OCI-LY7 (cell line): ENCODE measurements at regions of chr11 and their contacts with region 1.

Region 1: DNA sequence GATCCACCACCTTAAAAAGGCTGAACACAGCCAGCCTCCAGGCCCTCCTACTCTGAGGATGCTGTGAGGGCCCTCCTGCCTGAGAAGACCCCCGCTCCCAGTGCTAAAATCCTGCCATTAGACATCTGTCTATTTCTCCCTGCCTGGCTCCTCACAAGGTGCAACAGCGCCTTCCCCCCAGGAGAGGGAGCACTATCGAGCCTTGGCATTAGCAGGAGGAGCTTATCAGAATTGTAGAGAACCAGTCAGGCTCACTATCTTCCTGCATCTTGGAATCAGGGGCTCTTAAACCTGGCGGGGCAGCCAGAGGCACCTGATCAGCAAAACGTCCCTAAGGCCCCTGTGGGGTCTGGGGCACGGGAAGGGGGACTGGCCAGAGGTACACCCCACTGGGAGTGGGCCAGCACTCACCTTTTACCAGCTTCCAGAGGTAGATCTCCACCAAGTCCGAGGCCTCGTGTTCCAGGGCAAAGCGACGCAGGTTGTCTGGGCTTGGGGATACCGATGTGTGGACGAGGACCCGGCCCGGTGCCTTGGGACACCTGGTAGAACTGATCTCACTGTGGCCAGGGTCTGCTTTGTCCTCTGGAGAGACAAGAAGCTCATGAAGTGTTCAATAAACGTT is 28.7 kb downstream of the CHRDL2 start:
- DNase-seq: peak; percentile 63
- H3K4me3 ChIP-seq: no peak overlapping the region
- H3K27ac ChIP-seq: no peak overlapping the region
- H3K4me1 ChIP-seq: no peaks in the 10 kb centered on the region
- CTCF ChIP-seq: peak; percentile 89

Region 2: GRCh38 chr11:74806267-74806666 is 103.8 kb after region 1 on chr11:
- CTCF ChIA-PET with region 1: no interaction called
- POLR2A ChIA-PET with region 1: no interaction called
- intact Hi-C with region 1: no loop called
- DNase-seq: no peak
- H3K4me3 ChIP-seq: no peak overlapping the region
- H3K27ac ChIP-seq: no peak overlapping the region
- H3K4me1 ChIP-seq: no peaks in the 10 kb centered on the region
- CTCF ChIP-seq: no peak

Region 3: DNA sequence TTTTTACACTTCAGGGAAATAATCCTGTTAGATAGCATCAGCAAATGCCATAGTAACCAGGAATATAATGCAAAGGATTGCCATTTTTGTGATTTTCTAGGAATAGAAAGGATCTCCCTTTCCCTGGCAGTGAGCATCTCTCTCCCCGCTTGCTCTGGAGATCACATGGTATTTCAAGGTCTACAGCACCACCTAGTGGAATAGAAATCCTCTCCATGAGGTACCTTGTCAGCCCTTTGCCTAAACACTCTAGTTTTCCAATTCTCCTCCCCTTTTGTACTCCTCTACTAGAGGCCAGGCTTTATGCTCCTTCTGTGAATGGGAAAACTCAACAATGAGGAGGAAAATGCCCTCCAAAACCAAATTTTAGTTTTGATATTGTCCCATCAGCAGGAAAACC is 168.0 kb after region 1 on chr11:
- CTCF ChIA-PET with region 1: interaction called, 3 read pairs
- POLR2A ChIA-PET with region 1: no interaction called
- intact Hi-C with region 1: loop called (anchors 1 kb)
- DNase-seq: peak; percentile 63
- H3K4me3 ChIP-seq: no peak overlapping the region
- H3K27ac ChIP-seq: no peak overlapping the region
- H3K4me1 ChIP-seq: no peaks in the 10 kb centered on the region
- CTCF ChIP-seq: peak; percentile 80